Heart left ventricle (tissue), 16 donors: ENCODE measurements at regions of chr12 and their contacts with region 1.

Region 1: GRCh38 chr12:8746046-8746445 is 48.3 kb downstream of the RIMKLB start:
- DNase-seq: no peak
- ATAC-seq: no peak
- H3K4me3 ChIP-seq: no peak overlapping the region
- H3K27ac ChIP-seq: no peak overlapping the region
- H3K4me1 ChIP-seq: peaks cover 0 to 8% (median 0%) of the 10 kb centered on the region in 12 donors
- H3K27me3 ChIP-seq: no peaks in the 10 kb centered on the region
- CTCF ChIP-seq: no peak
- POLR2A ChIP-seq: no peak

Region 2: DNA sequence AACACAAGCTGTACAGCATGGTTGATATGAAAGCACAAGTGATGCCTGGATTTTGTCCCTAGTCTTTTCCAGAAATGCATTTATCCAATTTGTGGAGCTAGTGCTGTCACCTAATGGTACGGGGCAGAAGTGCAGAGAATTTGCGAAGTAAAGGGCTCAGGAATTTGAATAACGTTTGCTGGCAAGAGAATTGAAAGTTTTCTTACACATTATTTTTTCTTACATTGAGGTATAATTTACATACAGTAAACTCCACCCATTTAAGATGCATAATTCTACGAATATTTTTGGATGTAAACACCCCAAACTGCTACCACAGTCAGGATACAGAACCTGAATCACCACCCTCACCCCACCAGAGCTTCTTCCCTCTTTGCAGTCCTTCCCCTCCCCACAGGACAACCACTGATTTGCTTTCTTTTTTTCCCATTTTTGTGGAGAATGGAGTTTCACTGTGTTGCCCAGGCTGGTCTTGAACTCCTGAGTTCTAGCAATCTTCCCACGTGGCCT is 136.9 kb before region 1 on chr12:
- intact Hi-C with region 1: no loop called
- DNase-seq: no peak
- ATAC-seq: peak in 1 of 4 donors; percentile 55
- H3K4me3 ChIP-seq: no peak overlapping the region
- H3K27ac ChIP-seq: no peak overlapping the region
- H3K4me1 ChIP-seq: peaks cover 0 to 9% (median 0%) of the 10 kb centered on the region in 12 donors
- H3K27me3 ChIP-seq: no peaks in the 10 kb centered on the region
- CTCF ChIP-seq: peak; percentile 48 to 81 (median 67)
- POLR2A ChIP-seq: no peak

Region 3: DNA sequence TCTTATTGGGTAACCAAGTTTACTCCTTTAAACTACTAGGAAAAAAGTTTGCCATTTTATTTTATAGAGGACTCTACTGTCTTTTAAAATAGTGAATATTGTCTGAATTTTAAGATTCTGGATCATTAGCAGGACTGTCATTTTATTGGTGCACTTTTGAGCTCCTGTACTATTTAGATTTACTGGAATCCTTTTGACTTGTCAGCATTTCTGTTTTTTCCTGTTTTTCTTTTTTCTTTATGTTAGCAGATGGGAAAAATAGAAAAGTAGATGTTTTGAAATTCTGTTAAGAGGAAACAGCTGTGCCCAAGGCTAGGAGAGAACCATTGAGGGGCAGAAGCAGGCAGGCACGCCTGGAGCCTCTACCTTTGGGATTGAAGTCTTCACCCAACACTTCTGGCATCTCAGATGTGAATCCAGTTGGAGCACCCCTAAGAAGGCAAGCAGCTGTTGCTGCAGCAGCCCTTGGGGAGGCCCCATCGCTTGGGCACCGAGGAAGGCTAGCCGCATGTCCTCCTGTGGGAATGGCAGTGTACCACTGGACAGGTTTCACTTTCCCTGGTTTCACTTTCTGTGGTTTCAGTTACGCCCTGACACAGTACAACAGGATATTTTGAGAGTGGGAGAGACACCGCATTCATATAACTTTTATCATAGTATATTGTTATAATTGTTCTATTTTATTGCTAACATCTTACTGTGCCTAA is 36.8 kb before region 1 on chr12:
- intact Hi-C with region 1: loop called in 1 of 10 experiments (anchors 10 kb)
- DNase-seq: peak in 2 of 5 donors; percentile 30 to 31
- ATAC-seq: peak in 3 of 4 donors; percentile 72 to 90 (median 74)
- H3K4me3 ChIP-seq: peak overlapping the region in 10 of 12 donors; percentile 15 to 60 (median 40)
- H3K27ac ChIP-seq: peak overlapping the region in 11 of 12 donors; percentile 42 to 80 (median 50)
- H3K4me1 ChIP-seq: peaks cover 0 to 47% (median 28%) of the 10 kb centered on the region in 12 donors
- H3K27me3 ChIP-seq: no peaks in the 10 kb centered on the region
- CTCF ChIP-seq: no peak
- POLR2A ChIP-seq: no peak